ENCODE measurements at regions of chr3 and their contacts with region 1.

Region 1: GRCh38 chr3:113912552-113913236 is 35.1 kb upstream of the ZDHHC23 start:
- DNase-seq: peak in 7 of 9 donors; percentile 18 to 50 (median 36)
- ATAC-seq: peak; percentile 91
- H3K4me3 ChIP-seq: no peak overlapping the region
- H3K4me3 Mint-ChIP-seq: peak overlapping the region in 8 of 10 donors; percentile 29 to 75 (median 64)
- H3K27ac ChIP-seq: no peak overlapping the region
- H3K27ac Mint-ChIP-seq: peak overlapping the region in 6 of 9 donors; percentile 5 to 76 (median 58)
- H3K4me1 ChIP-seq: no peaks in the 10 kb centered on the region
- H3K4me1 Mint-ChIP-seq: peaks cover 0 to 7% (median 5%) of the 10 kb centered on the region in 7 donors
- H3K27me3 ChIP-seq: no peaks in the 10 kb centered on the region
- H3K27me3 Mint-ChIP-seq: peaks cover 0 to 15% (median 0%) of the 10 kb centered on the region in 5 donors

Region 2: DNA sequence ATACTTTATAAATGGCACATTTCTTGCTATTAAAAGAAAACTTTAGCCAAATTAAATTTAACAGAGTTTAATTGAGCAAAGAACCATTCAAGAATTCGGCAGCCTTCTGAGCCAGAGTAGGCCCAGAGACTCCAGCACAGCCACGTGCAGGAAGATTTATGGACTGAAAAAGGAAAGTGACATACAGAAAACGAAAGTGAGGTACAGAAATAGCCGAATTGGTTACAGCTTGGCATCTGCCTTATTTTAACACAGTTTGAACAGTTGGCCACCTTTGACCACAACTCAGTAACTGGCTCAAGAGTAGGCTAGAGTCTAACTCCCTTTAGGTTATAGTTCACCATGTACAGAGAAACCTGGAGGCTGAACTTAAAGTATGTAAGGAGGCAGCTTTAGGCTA is 489.0 kb before region 1 on chr3:
- CTCF ChIA-PET with region 1: no interaction called
- POLR2A ChIA-PET with region 1: no interaction called
- intact Hi-C with region 1: no loop called
- DNase-seq: no peak
- ATAC-seq: no peak
- H3K4me3 ChIP-seq: no peak overlapping the region
- H3K4me3 Mint-ChIP-seq: peak overlapping the region in 1 of 10 donors; percentile 14
- H3K27ac ChIP-seq: no peak overlapping the region
- H3K27ac Mint-ChIP-seq: no peak overlapping the region
- H3K4me1 ChIP-seq: no peaks in the 10 kb centered on the region
- H3K4me1 Mint-ChIP-seq: no peaks in the 10 kb centered on the region
- H3K27me3 ChIP-seq: no peaks in the 10 kb centered on the region
- H3K27me3 Mint-ChIP-seq: no peaks in the 10 kb centered on the region

Region 3: DNA sequence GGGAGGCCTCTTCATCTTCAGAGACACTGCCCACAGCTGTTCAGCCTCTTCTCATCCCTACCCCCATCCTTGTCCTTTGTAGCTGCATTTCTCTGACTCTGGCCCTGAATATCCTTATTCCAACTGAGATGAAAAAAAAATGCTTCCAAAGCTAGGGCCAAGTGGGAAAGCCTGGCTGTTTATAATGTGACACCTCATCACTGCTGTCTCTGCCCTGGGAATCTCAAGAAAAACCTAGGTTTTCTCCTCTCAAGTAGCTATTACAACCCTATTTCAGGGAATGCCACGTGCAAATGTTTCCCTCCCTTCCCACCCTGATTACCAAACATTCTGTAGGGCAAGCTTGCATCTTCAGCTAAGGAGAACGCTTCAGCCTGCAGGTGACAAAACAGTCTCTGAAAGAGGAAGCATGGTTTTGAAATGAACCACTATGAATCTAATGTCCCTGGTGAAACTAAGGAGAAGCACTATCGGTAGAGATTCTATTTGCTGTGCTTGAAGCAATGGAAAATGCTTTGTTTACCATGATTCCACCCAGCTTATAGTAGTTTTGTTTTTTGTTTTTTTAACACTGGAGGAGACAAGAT is 281.6 kb before region 1 on chr3:
- CTCF ChIA-PET with region 1: no interaction called
- POLR2A ChIA-PET with region 1: no interaction called
- intact Hi-C with region 1: no loop called
- DNase-seq: no peak
- ATAC-seq: no peak
- H3K4me3 ChIP-seq: no peak overlapping the region
- H3K4me3 Mint-ChIP-seq: no peak overlapping the region
- H3K27ac ChIP-seq: no peak overlapping the region
- H3K27ac Mint-ChIP-seq: peak overlapping the region in 6 of 9 donors; percentile 34 to 82 (median 60)
- H3K4me1 ChIP-seq: no peaks in the 10 kb centered on the region
- H3K4me1 Mint-ChIP-seq: peaks cover 0 to 7% (median 2%) of the 10 kb centered on the region in 7 donors
- H3K27me3 ChIP-seq: no peaks in the 10 kb centered on the region
- H3K27me3 Mint-ChIP-seq: no peaks in the 10 kb centered on the region

Region 4: GRCh38 chr3:113844622-113845222 is 68.0 kb before region 1 on chr3:
- CTCF ChIA-PET with region 1: interaction called, 7 read pairs
- POLR2A ChIA-PET with region 1: interaction called, 3 read pairs
- intact Hi-C with region 1: loop called (anchors 1 kb)
- DNase-seq: peak in 5 of 9 donors; percentile 7 to 25 (median 11)
- ATAC-seq: peak; percentile 60
- H3K4me3 ChIP-seq: no peak overlapping the region
- H3K4me3 Mint-ChIP-seq: no peak overlapping the region
- H3K27ac ChIP-seq: no peak overlapping the region
- H3K27ac Mint-ChIP-seq: no peak overlapping the region
- H3K4me1 ChIP-seq: no peaks in the 10 kb centered on the region
- H3K4me1 Mint-ChIP-seq: no peaks in the 10 kb centered on the region
- H3K27me3 ChIP-seq: no peaks in the 10 kb centered on the region
- H3K27me3 Mint-ChIP-seq: no peaks in the 10 kb centered on the region

Region 5: DNA sequence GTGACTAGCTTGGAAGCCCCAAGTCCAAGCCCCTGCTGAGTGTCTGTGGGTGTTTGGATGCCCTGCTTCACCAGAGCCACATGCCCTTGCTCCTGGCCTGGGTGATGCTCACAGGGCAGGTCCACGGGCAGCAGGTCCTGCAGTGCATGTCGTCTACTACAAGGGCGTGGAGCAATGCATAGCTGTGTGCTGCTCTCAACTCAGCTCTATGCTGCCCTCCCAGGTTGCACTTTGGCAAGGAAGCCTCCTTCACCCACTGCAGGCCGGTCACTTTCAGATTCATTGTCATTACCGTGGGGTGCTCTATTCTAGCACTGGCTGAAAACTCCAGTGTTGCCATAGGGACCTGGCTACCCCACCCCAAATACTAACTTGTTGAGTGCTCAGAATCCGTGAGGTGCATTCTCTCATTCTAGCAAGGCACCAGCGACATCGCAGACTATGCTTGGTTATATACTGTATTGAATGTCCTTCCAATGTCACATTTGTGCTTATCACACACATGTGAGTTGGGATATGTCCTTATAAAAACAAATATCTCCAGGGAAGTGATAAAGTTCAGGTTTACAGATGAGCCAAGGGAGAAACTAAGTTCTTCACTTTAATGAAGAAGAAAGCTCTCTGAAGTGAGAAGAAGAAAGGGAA is 22.3 kb before region 1 on chr3:
- CTCF ChIA-PET with region 1: no interaction called
- POLR2A ChIA-PET with region 1: no interaction called
- intact Hi-C with region 1: no loop called
- DNase-seq: no peak
- ATAC-seq: no peak
- H3K4me3 ChIP-seq: no peak overlapping the region
- H3K4me3 Mint-ChIP-seq: no peak overlapping the region
- H3K27ac ChIP-seq: no peak overlapping the region
- H3K27ac Mint-ChIP-seq: no peak overlapping the region
- H3K4me1 ChIP-seq: no peaks in the 10 kb centered on the region
- H3K4me1 Mint-ChIP-seq: no peaks in the 10 kb centered on the region
- H3K27me3 ChIP-seq: no peaks in the 10 kb centered on the region
- H3K27me3 Mint-ChIP-seq: peaks cover 0 to 4% (median 0%) of the 10 kb centered on the region in 5 donors

Region 6: DNA sequence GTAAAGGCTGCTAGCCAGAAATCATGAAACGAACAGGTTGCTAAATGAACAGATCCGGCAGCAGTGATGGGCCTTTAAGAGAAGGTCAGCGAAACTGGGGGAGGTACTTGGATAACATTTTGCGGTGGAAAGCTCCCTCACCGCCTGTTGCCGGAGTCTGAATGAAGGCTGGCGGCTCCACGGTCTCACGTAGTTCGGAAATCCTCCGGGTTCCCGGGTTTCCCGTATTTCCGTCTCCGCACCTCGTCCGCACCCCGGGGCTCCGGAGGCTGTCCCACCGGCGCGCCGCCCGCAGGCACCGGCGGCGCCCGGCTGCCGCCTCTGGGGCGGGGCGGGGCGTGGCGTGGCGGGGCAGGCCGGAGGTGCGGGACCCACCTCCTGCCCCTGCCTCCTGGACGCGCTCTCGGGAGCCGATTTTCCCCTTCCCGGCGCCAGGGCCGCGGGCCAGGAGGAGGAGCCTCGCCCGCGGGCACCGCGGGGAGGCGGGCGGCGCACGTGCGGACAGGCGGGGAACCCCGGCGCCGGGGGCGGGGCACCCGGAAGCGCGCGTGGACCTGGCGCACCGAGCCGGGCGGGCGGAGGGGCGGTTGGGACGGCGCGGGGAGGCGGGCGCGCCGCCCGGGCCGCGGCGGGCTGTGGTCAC is 34.8 kb after region 1 on chr3 and contains the start of gene ZDHHC23:
- CTCF ChIA-PET with region 1: no interaction called
- POLR2A ChIA-PET with region 1: no interaction called
- intact Hi-C with region 1: loop called (anchors 2 to 5 kb)
- DNase-seq: peak; percentile 55 to 82 (median 69)
- ATAC-seq: peak; percentile 92
- H3K4me3 ChIP-seq: peak within 1 kb of the TSS; percentile 62
- H3K4me3 Mint-ChIP-seq: peak within 1 kb of the TSS; percentile 79 to 94 (median 86)
- H3K27ac ChIP-seq: peak within 1 kb of the TSS; percentile 42
- H3K27ac Mint-ChIP-seq: peak within 1 kb of the TSS in 7 of 9 donors; percentile 33 to 81 (median 59)
- H3K4me1 ChIP-seq: peaks cover 0 to 8% of the 10 kb centered on the region in 2 donors
- H3K4me1 Mint-ChIP-seq: peaks cover 8 to 20% (median 13%) of the 10 kb centered on the region in 7 donors
- H3K27me3 ChIP-seq: no peaks in the 10 kb centered on the region
- H3K27me3 Mint-ChIP-seq: peaks cover 9 to 60% (median 14%) of the 10 kb centered on the region in 5 donors
- total RNA-seq, gene ZDHHC23: 2.1 to 3.4 (median 3.2) TPM

Region 7: DNA sequence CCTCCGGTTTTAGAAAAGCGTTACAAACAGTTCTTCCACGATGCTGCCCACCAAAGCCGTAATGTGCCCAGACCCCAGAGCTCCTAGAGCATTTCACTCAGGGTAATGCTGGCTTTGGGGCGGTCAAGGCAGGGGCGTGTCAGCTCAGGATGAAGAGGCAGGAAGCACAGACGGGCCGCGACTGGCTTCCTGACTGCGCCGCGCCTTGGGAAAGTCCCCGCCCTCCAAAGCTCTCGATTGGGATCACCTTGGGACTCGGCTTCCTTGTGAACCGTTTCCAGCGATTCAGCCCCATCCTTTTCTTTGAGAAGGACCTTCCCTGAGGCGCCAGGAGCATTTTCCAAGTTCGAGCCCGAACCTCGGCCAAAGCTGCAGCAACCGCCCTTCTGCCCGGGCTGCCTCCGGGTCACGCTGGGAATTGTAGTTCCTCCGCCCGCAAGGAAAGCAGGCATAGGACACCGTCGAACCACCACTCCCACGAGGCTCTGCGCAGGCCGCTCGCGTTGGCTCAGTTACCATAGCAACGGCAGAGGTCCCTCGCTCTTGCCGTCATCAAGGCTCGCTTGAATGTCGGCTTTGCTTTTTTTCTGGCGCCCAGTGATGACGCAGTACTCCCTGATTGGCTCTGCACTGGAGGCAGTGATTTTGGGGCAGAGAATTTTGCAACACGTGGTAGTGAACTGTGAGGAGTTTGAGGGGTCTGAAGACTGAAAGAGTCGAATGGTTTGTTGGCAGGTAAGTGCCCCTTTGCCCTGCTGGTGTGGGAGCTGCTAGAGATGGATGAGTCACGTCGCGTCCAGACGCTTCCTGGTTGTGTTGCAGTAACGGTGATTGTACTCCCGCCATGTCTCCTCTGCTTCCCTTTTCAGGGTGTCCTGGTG is 143.7 kb after region 1 on chr3 and contains the starts of genes CCDC191 and QTRT2:
- CTCF ChIA-PET with region 1: no interaction called
- POLR2A ChIA-PET with region 1: no interaction called
- intact Hi-C with region 1: loop called in 1 of 2 experiments (anchors 2 kb)
- DNase-seq: peak; percentile 82 to 99 (median 98)
- ATAC-seq: peak; percentile 97
- H3K4me3 ChIP-seq: peak within 1 kb of the TSS; percentile 95
- H3K4me3 Mint-ChIP-seq: peak within 1 kb of the TSS; percentile 91 to 100 (median 98)
- H3K27ac ChIP-seq: peak within 1 kb of the TSS; percentile 91
- H3K27ac Mint-ChIP-seq: peak within 1 kb of the TSS; percentile 87 to 99 (median 97)
- H3K4me1 ChIP-seq: peaks cover 10 to 12% of the 10 kb centered on the region in 2 donors
- H3K4me1 Mint-ChIP-seq: peaks cover 24 to 60% (median 55%) of the 10 kb centered on the region in 7 donors
- H3K27me3 ChIP-seq: no peaks in the 10 kb centered on the region
- H3K27me3 Mint-ChIP-seq: peaks cover 0 to 2% (median 0%) of the 10 kb centered on the region in 5 donors
- total RNA-seq, gene CCDC191: 3.9 to 8.8 (median 5.1) TPM
- total RNA-seq, gene QTRT2: 29.9 to 38.8 (median 33.8) TPM